Thyroid gland (tissue), 4 donors: ENCODE measurements at regions of chr2 and their contacts with region 1.

Region 1: GRCh38 chr2:96024336-96025193 is 10.2 kb downstream of the GPAT2 start:
- DNase-seq: no peak
- H3K4me3 ChIP-seq: no peak overlapping the region
- H3K27ac ChIP-seq: no peak overlapping the region
- H3K4me1 ChIP-seq: no peaks in the 10 kb centered on the region
- H3K27me3 ChIP-seq: no peaks in the 10 kb centered on the region
- CTCF ChIP-seq: no peak
- POLR2A ChIP-seq: no peak

Region 2: DNA sequence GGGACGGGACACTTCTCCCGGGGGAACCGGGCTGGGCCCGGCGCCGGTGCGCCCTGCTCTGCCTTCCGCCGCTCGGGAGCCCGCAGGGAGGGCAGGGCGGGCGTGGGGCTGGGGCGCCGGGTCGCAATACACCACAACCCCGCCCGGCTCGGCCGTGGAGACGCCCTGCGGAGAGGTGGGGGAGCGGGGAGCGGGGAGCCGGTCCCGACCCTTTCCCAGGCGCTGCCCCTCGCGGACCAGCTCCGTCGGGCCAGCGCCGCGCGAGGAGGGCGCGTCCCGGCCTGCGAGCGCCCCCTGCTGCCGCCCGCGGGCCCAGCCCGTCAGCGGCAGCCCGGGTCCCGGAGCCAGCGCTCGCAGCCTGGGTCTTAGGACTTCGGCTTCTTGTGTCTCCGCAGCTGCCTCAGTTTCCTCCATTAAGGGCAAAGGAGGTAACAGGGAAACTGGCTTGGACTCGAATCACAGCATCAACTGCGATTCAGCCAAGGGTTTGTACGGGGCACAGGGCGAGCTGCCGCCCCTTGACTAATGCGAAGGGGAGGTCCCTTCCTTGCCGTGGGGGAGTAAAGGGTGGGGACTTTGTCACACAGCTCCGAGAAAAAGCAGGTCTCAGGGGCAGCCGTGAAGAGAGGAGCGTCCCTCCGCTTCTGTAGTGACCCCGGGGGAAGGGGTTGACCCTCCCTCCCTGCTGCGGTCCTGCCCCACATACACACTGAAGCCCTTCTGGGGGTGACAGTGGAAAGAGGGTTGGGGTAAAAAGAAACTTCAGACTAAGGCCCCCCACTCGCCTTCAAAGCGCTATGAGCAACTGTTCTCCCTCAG is 92.5 kb after region 1 on chr2:
- intact Hi-C with region 1: loop called (anchors 10 kb)
- DNase-seq: peak; percentile 55
- H3K4me3 ChIP-seq: peak overlapping the region in 2 of 3 donors; percentile 29 to 35
- H3K27ac ChIP-seq: no peak overlapping the region
- H3K4me1 ChIP-seq: peaks cover 5 to 11% of the 10 kb centered on the region in 2 donors
- H3K27me3 ChIP-seq: no peaks in the 10 kb centered on the region
- CTCF ChIP-seq: peak in 5 of 6 experiments; percentile 44 to 98 (median 92)
- POLR2A ChIP-seq: no peak

Region 3: DNA sequence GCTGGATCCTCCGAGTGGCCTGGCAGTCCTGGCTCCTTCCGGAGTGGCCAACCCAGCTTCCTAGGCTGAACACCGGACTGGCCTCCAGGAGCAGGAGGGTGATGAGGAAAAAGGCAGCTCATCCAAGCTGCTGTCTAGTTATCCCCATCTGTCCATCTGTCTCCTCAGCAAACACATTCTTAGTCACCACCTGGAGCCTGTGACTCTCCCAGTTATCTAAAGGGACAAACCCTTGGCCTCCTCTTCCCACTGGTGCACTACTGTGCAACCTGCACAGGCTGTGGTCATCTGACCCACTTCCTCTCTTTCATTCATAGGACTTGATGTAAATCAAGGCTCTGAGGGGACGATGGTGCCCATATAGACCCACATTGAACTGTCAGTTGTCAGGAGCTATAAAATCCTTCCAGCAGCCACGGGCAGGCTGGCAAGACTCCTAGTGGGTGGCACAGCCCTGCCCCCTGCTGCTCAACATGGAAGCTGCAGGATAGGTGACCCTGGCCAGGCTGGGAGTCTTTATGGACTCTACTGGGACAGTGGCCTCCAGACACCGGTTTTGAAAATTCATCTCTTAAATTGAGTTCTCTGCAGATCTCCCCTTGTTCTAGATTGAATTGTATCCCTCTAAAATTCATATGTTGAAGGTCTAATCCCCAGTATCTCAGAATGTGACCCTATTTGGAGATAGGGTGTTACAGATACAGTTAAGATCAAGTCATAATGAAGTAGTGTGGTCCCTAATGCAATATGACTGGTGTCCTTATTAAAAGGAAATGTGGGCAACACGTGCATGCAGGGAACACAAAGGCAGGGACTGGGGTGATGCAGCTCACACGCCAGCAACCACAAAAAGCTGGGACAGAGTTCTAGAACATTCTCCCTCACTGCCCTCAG is 149.9 kb after region 1 on chr2:
- intact Hi-C with region 1: loop called (anchors 10 kb)
- DNase-seq: peak; percentile 74 to 84
- H3K4me3 ChIP-seq: no peak overlapping the region
- H3K27ac ChIP-seq: no peak overlapping the region
- H3K4me1 ChIP-seq: no peaks in the 10 kb centered on the region
- H3K27me3 ChIP-seq: no peaks in the 10 kb centered on the region
- CTCF ChIP-seq: peak; percentile 68 to 90 (median 80)
- POLR2A ChIP-seq: no peak